Upper lobe of right lung (tissue), 1 donor: ENCODE measurements at regions of chr17 and their contacts with region 1.

Region 1: GRCh38 chr17:46193626-46194392 is 580 bp upstream of the KANSL1 start:
- DNase-seq: peak; percentile 98
- ATAC-seq: peak; percentile 94
- H3K4me3 ChIP-seq: peak overlapping the region; percentile 91
- H3K27ac ChIP-seq: peak overlapping the region; percentile 98
- H3K4me1 ChIP-seq: peaks cover 24% of the 10 kb centered on the region
- H3K27me3 ChIP-seq: no peaks in the 10 kb centered on the region
- CTCF ChIP-seq: peak; percentile 4

Region 2: GRCh38 chr17:46044286-46044928 is 149.4 kb before region 1 on chr17:
- intact Hi-C with region 1: loop called (anchors 10 kb)
- DNase-seq: no peak
- ATAC-seq: peak; percentile 93
- H3K4me3 ChIP-seq: no peak overlapping the region
- H3K27ac ChIP-seq: peak overlapping the region; percentile 75
- H3K4me1 ChIP-seq: peaks cover 20% of the 10 kb centered on the region
- H3K27me3 ChIP-seq: no peaks in the 10 kb centered on the region
- CTCF ChIP-seq: peak; percentile 87